ENCODE measurements at regions of chr11 and their contacts with region 1.

Region 1: GRCh38 chr11:59615637-59616395 is at the start of gene OSBP:
- DNase-seq: peak; percentile 99
- ATAC-seq: peak; percentile 96
- H3K4me3 ChIP-seq: peak within 1 kb of the TSS; percentile 84 to 93 (median 90)
- H3K27ac ChIP-seq: peak within 1 kb of the TSS; percentile 80
- H3K4me1 ChIP-seq: peaks cover 53% of the 10 kb centered on the region
- H3K27me3 ChIP-seq: no peaks in the 10 kb centered on the region; a peak in 1 of 5 replicates
- CTCF ChIP-seq: no peak
- EP300 ChIP-seq: no peak
- POLR2A ChIP-seq: peak; percentile 40 to 68; a peak in 3 of 4 replicates
- RAD21 ChIP-seq: no peak
- total RNA-seq, gene OSBP: 13.5 and 23.0 TPM in 2 replicates

Region 2: DNA sequence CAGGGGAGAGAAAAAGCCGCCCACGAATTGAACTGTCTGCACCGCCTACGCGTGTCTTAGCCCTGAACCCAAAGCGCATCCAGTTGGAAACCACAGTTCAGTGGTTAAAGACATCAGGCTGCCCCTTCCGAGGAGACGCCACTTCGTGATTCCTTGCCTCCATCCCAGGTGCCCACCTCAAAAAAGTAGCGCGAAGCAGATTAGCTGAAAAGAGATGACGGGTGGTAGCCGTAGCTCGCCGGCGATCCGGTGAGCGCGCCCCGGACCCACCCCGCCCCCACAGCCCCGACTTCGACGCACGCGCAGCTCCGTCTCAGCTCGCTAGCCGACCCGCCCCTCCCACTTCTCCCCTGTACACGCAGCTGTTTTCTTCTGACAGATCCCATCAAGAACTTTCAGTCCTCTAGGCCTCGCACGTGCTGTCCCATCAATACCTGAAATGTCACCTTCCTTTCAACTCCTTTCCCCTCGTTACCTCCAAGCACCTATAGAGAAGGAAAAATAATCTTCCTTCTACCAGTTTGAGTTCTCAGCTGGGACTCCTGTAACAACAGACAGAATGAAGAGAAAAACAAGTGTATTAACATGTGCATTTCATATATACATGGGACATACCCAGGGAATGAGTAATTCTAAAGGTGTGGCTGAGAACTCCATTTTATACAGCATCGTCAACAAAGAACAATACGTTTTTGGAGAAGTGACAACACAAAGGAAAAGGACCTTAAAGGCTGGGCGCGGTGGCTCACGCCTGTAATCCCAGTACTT is 54.9 kb before region 1 on chr11:
- CTCF ChIA-PET with region 1: no interaction called
- POLR2A ChIA-PET with region 1: interaction called, 15 read pairs
- in situ Hi-C with region 1: no loop called
- intact Hi-C with region 1: no loop called
- DNase-seq: peak; percentile 77
- ATAC-seq: peak; percentile 42
- H3K4me3 ChIP-seq: peak overlapping the region; percentile 86 to 96 (median 92)
- H3K27ac ChIP-seq: peak overlapping the region; percentile 48
- H3K4me1 ChIP-seq: peaks cover 47% of the 10 kb centered on the region
- H3K27me3 ChIP-seq: no peaks in the 10 kb centered on the region; a peak in 1 of 5 replicates
- CTCF ChIP-seq: no peak
- EP300 ChIP-seq: no peak
- POLR2A ChIP-seq: no peak
- RAD21 ChIP-seq: no peak

Region 3: GRCh38 chr11:60098508-60098907 is 482.7 kb after region 1 on chr11:
- CTCF ChIA-PET with region 1: no interaction called
- POLR2A ChIA-PET with region 1: no interaction called
- in situ Hi-C with region 1: no loop called
- intact Hi-C with region 1: loop called (anchors 5 kb)
- DNase-seq: peak; percentile 67
- ATAC-seq: peak; percentile 88
- H3K4me3 ChIP-seq: no peak overlapping the region
- H3K27ac ChIP-seq: no peak overlapping the region
- H3K4me1 ChIP-seq: peaks cover 31% of the 10 kb centered on the region
- H3K27me3 ChIP-seq: no peaks in the 10 kb centered on the region; a peak in 1 of 5 replicates
- CTCF ChIP-seq: no peak
- EP300 ChIP-seq: peak in 1 of 2 experiments; percentile 80; a peak in 2 of 4 replicates
- POLR2A ChIP-seq: no peak
- RAD21 ChIP-seq: no peak